ENCODE measurements at regions of chr16 and their contacts with region 1.

Region 1: DNA sequence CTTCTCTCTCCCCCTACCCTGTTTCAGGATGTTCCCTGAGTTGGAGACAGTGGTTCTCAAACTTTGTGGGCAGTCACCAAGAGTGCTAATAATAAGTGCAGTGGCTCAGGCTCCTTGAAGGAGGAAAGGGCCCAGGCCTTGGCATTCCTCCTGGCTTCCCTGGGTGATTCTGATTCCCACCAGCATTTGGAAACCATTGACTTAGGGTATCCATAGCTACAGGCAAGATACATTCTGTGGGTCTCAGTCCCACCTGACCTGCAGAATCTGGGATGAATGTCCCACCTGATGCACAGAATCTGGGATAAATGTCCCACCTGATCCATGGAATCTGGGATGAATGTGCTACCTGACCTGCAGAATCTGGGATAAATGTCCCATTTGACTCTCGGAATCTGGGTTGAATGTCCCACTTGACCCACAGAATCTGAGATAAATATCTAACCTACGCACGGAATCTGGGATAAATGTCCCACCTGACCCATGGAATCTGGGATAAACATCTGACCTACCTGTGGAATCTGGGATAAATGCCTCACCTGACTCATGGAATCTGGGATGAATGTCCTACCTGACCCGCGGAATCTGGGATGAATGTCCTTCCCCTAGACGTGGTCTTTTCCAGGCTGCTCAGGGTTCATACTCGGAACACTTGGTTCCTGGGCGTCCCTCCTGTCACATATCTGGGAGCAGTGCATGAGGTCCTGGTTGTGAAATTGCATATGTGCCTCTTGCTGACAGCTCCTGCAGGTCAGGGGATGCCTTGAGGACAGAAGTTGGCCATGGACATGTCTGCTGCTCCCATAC is 136.7 kb upstream of the HS3ST2 start:
- DNase-seq: no peak

Region 2: GRCh38 chr16:21574381-21574780 is 1102.8 kb before region 1 on chr16:
- in situ Hi-C with region 1: loop called (anchors 5 kb)
- DNase-seq: no peak

Region 3: DNA sequence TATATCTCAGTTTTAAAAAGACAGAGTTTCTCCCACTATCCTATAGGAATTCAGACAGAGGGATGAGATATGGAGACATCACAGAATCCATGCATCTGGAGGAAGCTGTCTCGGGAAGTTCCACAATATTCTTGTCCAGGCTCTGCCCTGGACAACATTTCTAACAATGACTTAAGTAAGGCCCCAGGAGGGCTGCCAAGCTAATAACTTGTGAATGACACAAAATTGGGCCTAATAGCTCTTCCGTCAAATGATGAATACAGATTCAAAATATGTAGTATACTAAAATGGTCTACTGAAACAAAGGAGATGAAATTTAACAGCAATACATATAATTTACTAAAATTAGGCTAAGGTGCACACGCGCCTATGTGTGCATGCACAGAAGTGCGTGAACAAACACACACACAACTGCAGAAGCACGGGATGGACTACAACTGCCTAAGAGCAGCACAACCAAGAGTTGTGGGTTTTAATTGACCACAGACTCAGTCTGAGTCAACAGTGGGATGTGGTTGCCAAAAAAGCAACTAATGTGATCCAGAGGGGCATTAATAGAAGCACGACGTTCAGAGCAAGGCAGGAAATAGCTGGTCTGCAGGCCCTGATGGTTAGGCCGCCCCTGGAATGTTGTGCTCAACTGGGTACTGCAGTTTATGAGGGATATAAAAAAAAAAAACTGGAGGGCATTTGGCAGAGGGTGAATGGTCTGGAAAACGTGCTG is 110.4 kb after region 1 on chr16:
- in situ Hi-C with region 1: no loop called
- DNase-seq: peak; percentile 81